IMR-90 (cell line): ENCODE measurements at regions of chr2 and their contacts with region 1.

Region 1: GRCh38 chr2:201696151-201696659 is 2.2 kb downstream of the MPP4 start:
- DNase-seq: peak; percentile 96
- ATAC-seq: peak; percentile 72
- H3K4me3 ChIP-seq: no peak overlapping the region
- H3K27ac ChIP-seq: peak overlapping the region; percentile 94
- H3K4me1 ChIP-seq: peaks cover 26% of the 10 kb centered on the region
- H3K27me3 ChIP-seq: no peaks in the 10 kb centered on the region
- CTCF ChIP-seq: no peak
- POLR2A ChIP-seq: no peak
- RAD21 ChIP-seq: no peak

Region 2: DNA sequence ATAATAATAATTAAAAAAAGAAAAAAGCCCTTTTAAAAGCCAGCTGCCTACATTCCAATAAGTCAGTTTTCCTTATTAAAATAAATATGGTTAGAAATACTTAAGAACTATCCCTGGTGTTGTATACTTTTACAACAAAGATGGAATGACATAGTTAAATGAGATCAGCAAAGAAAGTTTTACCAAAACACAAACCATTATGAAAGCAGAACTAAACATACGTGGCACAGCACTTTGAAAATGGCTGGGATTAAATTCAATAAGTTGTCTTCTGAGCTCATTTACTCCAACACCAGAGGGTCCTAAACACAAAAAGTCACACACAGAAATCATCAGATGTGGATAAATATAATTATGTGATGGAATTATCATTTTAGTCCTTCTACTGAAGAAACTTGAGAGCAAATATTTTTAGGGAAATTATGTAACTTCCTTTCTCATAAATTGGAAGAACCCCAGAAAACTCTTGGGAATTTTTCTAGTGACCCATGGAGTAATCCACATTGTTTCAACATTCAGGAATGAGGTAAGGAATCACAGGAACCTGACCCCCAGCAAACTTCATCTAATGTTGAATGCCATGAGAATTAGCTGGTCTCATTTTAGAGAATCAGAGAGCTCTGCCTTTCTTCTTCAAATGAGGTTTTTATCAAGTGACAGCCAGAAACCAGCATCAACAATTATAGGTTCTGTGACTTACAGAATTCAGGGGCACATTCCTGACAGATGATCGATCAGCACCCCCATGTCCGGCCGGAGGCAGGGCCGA is 41.4 kb before region 1 on chr2:
- CTCF ChIA-PET with region 1: interaction called, 3 read pairs
- POLR2A ChIA-PET with region 1: no interaction called
- dilution Hi-C with region 1: no loop called
- in situ Hi-C with region 1: no loop called
- intact Hi-C with region 1: loop called (anchors 1 kb)
- DNase-seq: peak; percentile 91
- ATAC-seq: peak; percentile 65
- H3K4me3 ChIP-seq: no peak overlapping the region; the same call in 1 of the 2 replicates
- H3K27ac ChIP-seq: peak overlapping the region; percentile 93
- H3K4me1 ChIP-seq: peaks cover 17% of the 10 kb centered on the region
- H3K27me3 ChIP-seq: no peaks in the 10 kb centered on the region
- CTCF ChIP-seq: no peak
- POLR2A ChIP-seq: no peak
- RAD21 ChIP-seq: no peak